CD8-positive, alpha-beta memory T cell (primary cell): ENCODE measurements at regions of chr11 and their contacts with region 1.

Region 1: DNA sequence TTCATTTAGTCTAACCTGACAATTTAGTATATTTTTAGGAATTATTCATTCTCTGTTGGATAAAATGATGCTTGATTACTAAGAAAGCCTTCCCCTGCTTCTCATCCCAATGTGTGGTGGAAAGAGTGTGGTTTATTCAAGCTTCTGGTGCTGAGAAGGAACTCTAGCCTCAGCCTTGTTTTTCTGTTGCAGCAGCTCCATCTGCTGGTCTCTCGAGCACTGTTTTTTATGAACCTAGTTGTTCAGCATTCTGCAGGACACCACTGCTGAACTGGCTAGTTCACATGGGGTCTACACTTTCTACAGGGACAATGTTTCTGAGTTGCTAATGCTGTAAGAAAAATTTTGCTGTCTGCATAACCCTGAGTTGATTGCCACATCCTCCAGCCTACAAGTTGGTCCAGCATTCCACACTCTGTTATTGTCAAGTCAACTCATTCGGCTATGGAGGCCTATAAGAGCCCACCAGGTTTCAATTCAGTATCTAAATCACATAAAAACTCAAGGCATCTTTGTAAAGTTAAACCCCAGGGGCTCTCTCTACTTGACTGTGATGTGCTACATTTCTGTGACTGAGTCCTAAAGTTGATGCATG is 14.3 kb downstream of the OR2AG2 start:
- DNase-seq: peak; percentile 32 to 74 (median 53)
- H3K4me3 ChIP-seq: no peak overlapping the region
- H3K4me3 Mint-ChIP-seq: no peak overlapping the region
- H3K27ac ChIP-seq: no peak overlapping the region
- H3K27ac Mint-ChIP-seq: no peak overlapping the region
- H3K4me1 ChIP-seq: no peaks in the 10 kb centered on the region
- H3K4me1 Mint-ChIP-seq: peaks cover 2 to 16% (median 12%) of the 10 kb centered on the region in 3 donors
- H3K27me3 ChIP-seq: no peaks in the 10 kb centered on the region
- H3K27me3 Mint-ChIP-seq: peaks cover 14 to 15% of the 10 kb centered on the region in 2 donors

Region 2: GRCh38 chr11:6531267-6531752 is 226.2 kb before region 1 on chr11:
- CTCF ChIA-PET with region 1: interaction called, 19 read pairs
- POLR2A ChIA-PET with region 1: no interaction called
- DNase-seq: peak in 2 of 5 donors; percentile 21 to 33
- H3K4me3 ChIP-seq: no peak overlapping the region
- H3K4me3 Mint-ChIP-seq: no peak overlapping the region
- H3K27ac ChIP-seq: no peak overlapping the region
- H3K27ac Mint-ChIP-seq: no peak overlapping the region
- H3K4me1 ChIP-seq: peaks cover 4% of the 10 kb centered on the region
- H3K4me1 Mint-ChIP-seq: peaks cover 7 to 13% (median 12%) of the 10 kb centered on the region in 3 donors
- H3K27me3 ChIP-seq: no peaks in the 10 kb centered on the region
- H3K27me3 Mint-ChIP-seq: no peaks in the 10 kb centered on the region

Region 3: DNA sequence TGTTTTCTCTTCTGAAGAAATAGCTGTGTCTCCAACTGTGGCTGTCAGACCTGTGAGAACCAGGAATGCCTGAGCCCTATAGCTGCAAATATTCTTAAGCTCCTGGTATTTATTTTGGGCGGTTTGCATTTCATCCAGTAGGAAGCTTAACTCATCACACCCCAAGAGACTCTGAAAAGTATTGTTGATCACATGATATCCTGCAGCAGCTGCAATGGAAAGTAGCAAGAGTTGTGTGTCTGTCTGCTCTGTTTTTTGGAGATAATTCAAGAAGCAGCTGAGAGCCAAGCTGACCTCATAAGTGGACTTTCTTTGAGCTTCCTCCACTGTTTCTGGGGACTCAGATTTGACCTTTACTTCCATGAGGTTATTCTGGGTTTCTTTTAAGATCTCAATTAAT is 37.9 kb before region 1 on chr11:
- CTCF ChIA-PET with region 1: interaction called, 12 read pairs
- POLR2A ChIA-PET with region 1: no interaction called
- DNase-seq: no peak
- H3K4me3 ChIP-seq: no peak overlapping the region
- H3K4me3 Mint-ChIP-seq: peak overlapping the region in 1 of 7 donors; percentile 28
- H3K27ac ChIP-seq: no peak overlapping the region
- H3K27ac Mint-ChIP-seq: peak overlapping the region in 7 of 8 donors; percentile 21 to 84 (median 72)
- H3K4me1 ChIP-seq: peaks cover 62% of the 10 kb centered on the region
- H3K4me1 Mint-ChIP-seq: peaks cover 86 to 99% (median 95%) of the 10 kb centered on the region in 3 donors
- H3K27me3 ChIP-seq: no peaks in the 10 kb centered on the region
- H3K27me3 Mint-ChIP-seq: no peaks in the 10 kb centered on the region

Region 4: GRCh38 chr11:6737872-6738466 is 19.5 kb before region 1 on chr11:
- CTCF ChIA-PET with region 1: interaction called, 317 read pairs
- POLR2A ChIA-PET with region 1: interaction called, 5 read pairs
- DNase-seq: peak; percentile 50 to 75 (median 66)
- H3K4me3 ChIP-seq: no peak overlapping the region
- H3K4me3 Mint-ChIP-seq: peak overlapping the region in 6 of 7 donors; percentile 5 to 55 (median 36)
- H3K27ac ChIP-seq: no peak overlapping the region
- H3K27ac Mint-ChIP-seq: peak overlapping the region; percentile 54 to 95 (median 80)
- H3K4me1 ChIP-seq: peaks cover 82% of the 10 kb centered on the region
- H3K4me1 Mint-ChIP-seq: peaks cover 85 to 96% (median 95%) of the 10 kb centered on the region in 3 donors
- H3K27me3 ChIP-seq: no peaks in the 10 kb centered on the region
- H3K27me3 Mint-ChIP-seq: no peaks in the 10 kb centered on the region

Region 5: GRCh38 chr11:6812390-6813005 is 55.0 kb after region 1 on chr11:
- CTCF ChIA-PET with region 1: no interaction called
- POLR2A ChIA-PET with region 1: no interaction called
- DNase-seq: peak in 2 of 5 donors; percentile 26 to 41
- H3K4me3 ChIP-seq: no peak overlapping the region
- H3K4me3 Mint-ChIP-seq: no peak overlapping the region
- H3K27ac ChIP-seq: no peak overlapping the region
- H3K27ac Mint-ChIP-seq: no peak overlapping the region
- H3K4me1 ChIP-seq: no peaks in the 10 kb centered on the region
- H3K4me1 Mint-ChIP-seq: peaks cover 0 to 3% (median 0%) of the 10 kb centered on the region in 3 donors
- H3K27me3 ChIP-seq: peaks cover 3% of the 10 kb centered on the region
- H3K27me3 Mint-ChIP-seq: peaks cover 14 to 54% of the 10 kb centered on the region in 2 donors

Region 6: DNA sequence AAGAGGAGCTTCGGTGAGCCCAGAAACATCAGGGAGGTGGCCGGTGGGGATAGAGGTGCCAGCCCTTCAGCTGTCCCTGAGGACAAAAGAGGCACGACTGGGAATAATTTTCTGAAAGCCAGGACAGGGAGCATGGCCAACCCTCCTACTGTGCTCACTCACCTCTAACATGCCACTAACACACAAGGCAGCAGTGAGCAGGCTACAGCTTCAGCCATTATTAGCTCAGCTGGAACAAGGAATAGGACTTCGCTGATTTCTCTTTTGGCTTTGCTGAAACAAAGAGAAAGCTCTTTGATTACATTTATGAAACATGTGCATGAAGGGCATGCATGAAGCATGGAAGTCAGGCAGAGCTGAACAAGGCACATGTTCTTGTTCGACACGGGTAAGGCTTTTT is 75.9 kb after region 1 on chr11:
- CTCF ChIA-PET with region 1: no interaction called
- POLR2A ChIA-PET with region 1: no interaction called
- DNase-seq: no peak
- H3K4me3 ChIP-seq: no peak overlapping the region
- H3K4me3 Mint-ChIP-seq: no peak overlapping the region
- H3K27ac ChIP-seq: no peak overlapping the region
- H3K27ac Mint-ChIP-seq: no peak overlapping the region
- H3K4me1 ChIP-seq: no peaks in the 10 kb centered on the region
- H3K4me1 Mint-ChIP-seq: no peaks in the 10 kb centered on the region
- H3K27me3 ChIP-seq: no peaks in the 10 kb centered on the region
- H3K27me3 Mint-ChIP-seq: peaks cover 5 to 19% of the 10 kb centered on the region in 2 donors